Activated CD8-positive, alpha-beta T cell treated with anti-CD3 and anti-CD28 coated beads for 36 hours (primary cell): ENCODE measurements at regions of chr6 and their contacts with region 1.

Region 1: DNA sequence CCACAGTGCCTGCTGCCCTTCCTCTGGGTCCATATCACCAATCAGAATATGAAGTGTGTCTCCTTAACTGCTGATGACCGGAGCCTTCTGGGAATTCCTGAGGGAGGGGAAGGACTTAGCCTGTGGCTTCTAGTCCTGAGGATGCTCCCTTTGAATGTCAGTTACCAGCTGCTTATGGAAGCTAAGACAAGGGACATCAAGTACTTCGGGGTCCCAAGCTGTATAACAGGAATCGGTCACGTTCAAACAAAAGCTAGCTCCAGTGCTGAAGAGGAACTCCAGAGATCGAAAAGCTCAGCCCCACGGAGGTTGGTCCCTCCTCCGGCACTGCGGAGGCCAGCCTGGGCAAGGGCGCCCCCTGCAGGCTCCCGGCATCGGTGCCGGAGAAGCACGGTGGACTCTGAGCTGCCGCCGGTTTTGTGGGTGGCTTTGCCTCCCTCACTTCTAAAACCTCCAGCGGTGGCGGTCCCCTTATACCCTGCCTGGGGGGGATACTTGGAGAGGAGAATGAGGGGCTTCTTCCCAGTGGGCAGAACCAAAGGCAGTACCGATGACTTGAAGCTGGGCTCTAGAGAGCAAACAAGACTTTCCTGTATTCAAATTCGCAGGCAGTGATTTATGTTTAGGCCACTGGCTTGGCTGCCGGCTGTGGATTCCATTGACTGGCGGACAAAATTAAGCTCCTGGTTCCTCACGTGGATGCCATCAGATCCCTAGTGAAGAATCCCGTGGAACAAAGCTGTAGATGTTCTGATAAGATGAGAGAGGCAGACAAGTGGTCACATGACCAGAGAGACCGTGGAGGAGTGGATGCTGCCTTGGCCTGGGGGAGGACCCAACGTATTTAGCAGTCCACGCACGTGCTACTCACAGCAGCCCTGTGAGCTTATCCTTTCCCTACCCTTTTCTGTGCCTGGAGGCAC is 16.2 kb upstream of the UBR2 start:
- DNase-seq: peak; percentile 90
- ATAC-seq: peak; percentile 99
- H3K4me3 Mint-ChIP-seq: peak overlapping the region; percentile 64
- H3K27ac Mint-ChIP-seq: no peak overlapping the region
- H3K4me1 Mint-ChIP-seq: peaks cover 13% of the 10 kb centered on the region
- H3K27me3 Mint-ChIP-seq: peaks cover 10% of the 10 kb centered on the region
- CTCF ChIP-seq: peak; percentile 97

Region 2: GRCh38 chr6:42260972-42261371 is 286.7 kb before region 1 on chr6:
- CTCF ChIA-PET with region 1: interaction called, 126 read pairs
- POLR2A ChIA-PET with region 1: interaction called, 3 read pairs
- intact Hi-C with region 1: loop called (anchors 5 kb)
- DNase-seq: peak; percentile 54
- ATAC-seq: peak; percentile 88
- H3K4me3 Mint-ChIP-seq: no peak overlapping the region
- H3K27ac Mint-ChIP-seq: no peak overlapping the region
- H3K4me1 Mint-ChIP-seq: peaks cover 2% of the 10 kb centered on the region
- H3K27me3 Mint-ChIP-seq: no peaks in the 10 kb centered on the region
- CTCF ChIP-seq: peak; percentile 76

Region 3: GRCh38 chr6:42338663-42339218 is 208.9 kb before region 1 on chr6:
- CTCF ChIA-PET with region 1: interaction called, 21 read pairs
- POLR2A ChIA-PET with region 1: no interaction called
- intact Hi-C with region 1: no loop called
- DNase-seq: no peak
- ATAC-seq: no peak
- H3K4me3 Mint-ChIP-seq: no peak overlapping the region
- H3K27ac Mint-ChIP-seq: peak overlapping the region; percentile 82
- H3K4me1 Mint-ChIP-seq: peaks cover 59% of the 10 kb centered on the region
- H3K27me3 Mint-ChIP-seq: no peaks in the 10 kb centered on the region
- CTCF ChIP-seq: no peak

Region 4: DNA sequence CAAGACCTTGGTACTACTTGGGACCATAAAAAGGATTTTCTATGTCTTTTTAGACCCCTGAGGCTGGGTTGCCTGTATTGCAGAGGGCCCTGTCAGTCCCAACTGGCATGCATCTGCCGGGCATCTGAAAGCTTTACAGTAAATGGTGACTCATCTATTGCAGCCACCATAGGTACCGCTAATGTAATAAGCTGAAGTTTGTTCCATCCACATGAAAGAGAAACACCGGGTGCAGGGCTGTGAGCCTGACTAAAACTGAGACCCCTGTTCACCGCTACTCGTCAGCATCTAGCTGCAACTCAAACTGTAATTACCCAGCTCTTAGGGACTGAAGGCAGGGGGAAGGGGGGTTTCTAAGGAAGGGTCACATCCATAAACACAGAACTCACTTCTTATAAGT is 145.5 kb before region 1 on chr6:
- CTCF ChIA-PET with region 1: interaction called, 11 read pairs
- POLR2A ChIA-PET with region 1: no interaction called
- intact Hi-C with region 1: no loop called
- DNase-seq: peak; percentile 84
- ATAC-seq: peak; percentile 85
- H3K4me3 Mint-ChIP-seq: no peak overlapping the region
- H3K27ac Mint-ChIP-seq: peak overlapping the region; percentile 56
- H3K4me1 Mint-ChIP-seq: peaks cover 69% of the 10 kb centered on the region
- H3K27me3 Mint-ChIP-seq: no peaks in the 10 kb centered on the region
- CTCF ChIP-seq: no peak

Region 5: DNA sequence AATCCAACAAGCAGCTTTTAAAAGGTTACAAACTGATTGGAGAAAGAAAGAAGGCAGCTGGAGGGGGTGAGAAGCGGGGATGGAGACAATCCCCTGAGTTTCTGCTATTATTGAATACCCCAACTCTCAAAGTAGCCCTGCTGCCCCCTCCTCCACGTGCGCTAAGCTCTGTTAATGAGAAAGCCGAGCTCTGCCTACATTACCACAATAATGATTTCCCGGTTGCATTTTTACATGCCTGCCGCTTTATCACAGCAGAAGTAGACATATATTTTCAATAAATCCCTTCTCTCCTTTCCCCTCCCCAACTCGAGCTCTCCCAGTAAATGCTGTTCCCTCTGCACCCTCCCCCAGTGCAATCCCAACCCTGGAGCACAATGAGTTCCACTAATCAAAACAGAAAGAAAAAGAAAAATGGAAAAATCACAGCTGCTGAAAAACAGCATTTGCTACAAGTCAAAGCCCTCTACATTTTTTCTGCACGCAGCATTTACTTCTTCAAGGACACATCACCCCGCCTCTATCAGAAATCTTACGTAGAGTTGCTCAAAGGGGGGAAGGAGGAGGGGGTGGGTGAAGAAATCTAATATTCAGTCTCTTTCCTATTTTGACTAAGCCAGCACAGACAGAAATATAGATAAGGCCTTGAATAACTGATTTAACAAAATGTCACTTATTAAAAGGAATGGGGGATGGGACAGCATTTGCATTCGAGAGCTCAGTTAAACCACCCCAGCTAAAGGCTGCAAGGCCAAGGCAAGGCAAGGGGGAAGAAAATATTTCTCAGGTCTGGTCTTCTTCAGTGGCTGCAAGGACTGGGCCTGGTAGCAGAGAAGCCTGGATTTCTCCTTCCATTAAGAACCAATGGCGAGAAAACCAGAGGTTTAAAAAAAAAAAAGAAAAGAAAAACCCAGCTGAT is 106.6 kb before region 1 on chr6:
- CTCF ChIA-PET with region 1: interaction called, 56 read pairs
- POLR2A ChIA-PET with region 1: no interaction called
- intact Hi-C with region 1: no loop called
- DNase-seq: no peak
- ATAC-seq: peak; percentile 34
- H3K4me3 Mint-ChIP-seq: peak overlapping the region; percentile 16
- H3K27ac Mint-ChIP-seq: peak overlapping the region; percentile 69
- H3K4me1 Mint-ChIP-seq: peaks cover 49% of the 10 kb centered on the region
- H3K27me3 Mint-ChIP-seq: no peaks in the 10 kb centered on the region
- CTCF ChIP-seq: no peak

Region 6: GRCh38 chr6:42493914-42494539 is 53.6 kb before region 1 on chr6:
- CTCF ChIA-PET with region 1: interaction called, 10 read pairs
- POLR2A ChIA-PET with region 1: no interaction called
- intact Hi-C with region 1: no loop called
- DNase-seq: no peak
- ATAC-seq: no peak
- H3K4me3 Mint-ChIP-seq: no peak overlapping the region
- H3K27ac Mint-ChIP-seq: no peak overlapping the region
- H3K4me1 Mint-ChIP-seq: peaks cover 2% of the 10 kb centered on the region
- H3K27me3 Mint-ChIP-seq: no peaks in the 10 kb centered on the region
- CTCF ChIP-seq: no peak